ENCODE measurements at regions of chr1 and their contacts with region 1.

Region 1: GRCh38 chr1:212805767-212806166 is 14.1 kb downstream of the TATDN3 start:
- DNase-seq: no peak
- ATAC-seq: no peak
- H3K4me3 ChIP-seq: no peak overlapping the region
- H3K27ac ChIP-seq: no peak overlapping the region
- H3K4me1 ChIP-seq: no peaks in the 10 kb centered on the region
- H3K27me3 ChIP-seq: no peaks in the 10 kb centered on the region
- CTCF ChIP-seq: no peak
- EP300 ChIP-seq: no peak
- POLR2A ChIP-seq: no peak
- RAD21 ChIP-seq: no peak

Region 2: GRCh38 chr1:212791676-212792395 is 13.9 kb before region 1 on chr1 and contains the starts of genes NSL1 and TATDN3:
- CTCF ChIA-PET with region 1: no interaction called
- POLR2A ChIA-PET with region 1: interaction called, 23 read pairs
- in situ Hi-C with region 1: no loop called
- intact Hi-C with region 1: no loop called
- DNase-seq: peak; percentile 75 to 98 (median 80)
- ATAC-seq: peak; percentile 84
- H3K4me3 ChIP-seq: peak within 1 kb of the TSS; percentile 72
- H3K27ac ChIP-seq: peak within 1 kb of the TSS; percentile 92
- H3K4me1 ChIP-seq: peaks cover 17 to 30% of the 10 kb centered on the region in 2 experiments
- H3K27me3 ChIP-seq: no peaks in the 10 kb centered on the region
- CTCF ChIP-seq: peak in 1 of 3 experiments; percentile 21; a peak in 2 of 6 replicates
- EP300 ChIP-seq: peak; percentile 70
- POLR2A ChIP-seq: peak; percentile 98
- RAD21 ChIP-seq: peak in 1 of 2 experiments; percentile 8; a peak in 1 of 4 replicates
- polyA plus RNA-seq, gene NSL1: 85.9 to 105 TPM
- polyA plus RNA-seq, gene TATDN3: 68.1 to 79.9 TPM

Measured in K562 (cell line).